Caki2 (cell line): ENCODE measurements at regions of chr3 and their contacts with region 1.

Region 1: GRCh38 chr3:171187706-171188290 is 161.3 kb upstream of the SLC2A2 start:
- DNase-seq: peak; percentile 57

Region 2: GRCh38 chr3:171095063-171095462 is 92.7 kb before region 1 on chr3:
- in situ Hi-C with region 1: no loop called
- DNase-seq: no peak

Region 3: GRCh38 chr3:171459942-171460724 is 272.3 kb after region 1 on chr3 and contains the start of gene TNIK:
- in situ Hi-C with region 1: loop called (anchors 25 kb)
- DNase-seq: peak; percentile 98
- total RNA-seq, gene TNIK: 16.6 and 19.1 TPM in 2 replicates